GM10248 (cell line): ENCODE measurements at regions of chr3 and their contacts with region 1.

Region 1: DNA sequence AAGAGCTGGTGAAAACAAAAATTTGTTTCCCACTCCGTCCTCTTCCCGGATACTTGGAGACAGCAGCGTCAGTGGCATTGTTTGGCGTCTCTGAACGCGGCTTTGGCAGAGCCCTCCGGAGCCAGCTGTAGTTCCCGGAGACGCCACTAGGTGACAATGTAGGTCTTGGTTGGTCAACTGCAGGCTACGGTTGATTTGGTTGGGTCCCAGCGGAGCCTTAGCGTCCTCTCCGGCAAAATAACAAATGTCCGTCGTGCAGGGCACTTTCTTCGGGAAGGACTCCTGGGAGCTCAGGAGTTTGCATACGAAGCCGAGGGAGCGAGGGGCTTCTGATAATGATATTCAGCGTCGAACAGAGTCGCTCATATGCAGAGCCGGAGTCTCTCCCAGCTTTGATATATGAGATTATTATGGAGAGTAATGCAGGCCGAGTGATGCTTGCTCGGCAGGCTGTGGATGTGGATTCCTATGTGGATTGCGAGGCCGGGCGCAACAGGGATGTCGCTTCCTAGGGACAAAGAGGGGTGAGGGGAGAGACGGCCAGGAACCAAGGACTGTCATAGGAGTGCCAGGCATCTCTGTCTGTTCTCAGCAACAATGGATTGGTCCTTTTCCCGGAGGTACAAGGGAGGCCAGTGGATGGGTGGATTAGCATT is 74.8 kb downstream of the IL20RB start:
- DNase-seq: peak; percentile 83
- CTCF ChIP-seq: peak; percentile 94

Region 2: DNA sequence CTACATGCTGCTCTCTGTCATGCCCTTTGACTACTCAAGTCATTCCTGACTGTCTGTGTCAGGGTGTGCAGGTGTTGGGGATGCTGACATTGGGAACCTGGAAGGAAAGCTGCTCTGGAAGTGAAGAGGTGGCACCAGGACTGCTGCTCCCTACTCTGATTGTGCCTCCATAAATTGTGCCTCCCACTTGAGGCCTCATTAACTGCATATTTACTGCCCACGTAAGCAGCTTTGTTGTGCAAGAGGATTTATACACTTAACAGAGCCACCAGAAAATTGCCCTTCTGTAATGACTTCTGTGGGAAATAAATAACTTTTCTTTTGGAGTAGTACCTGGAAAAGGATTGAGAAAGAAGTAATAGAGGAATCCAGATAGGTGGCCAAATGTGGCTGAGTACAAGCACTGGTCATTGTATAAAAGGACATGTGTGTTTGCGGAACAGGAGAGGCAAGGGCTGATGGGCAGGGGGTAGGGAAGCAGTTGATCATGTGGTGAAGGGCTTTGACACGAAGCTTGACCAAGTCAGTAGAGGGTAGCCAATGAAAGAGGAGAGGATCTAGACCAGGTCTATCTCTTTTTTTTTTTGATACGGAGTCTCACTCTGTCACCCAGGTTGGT is 50.0 kb before region 1 on chr3:
- CTCF ChIA-PET with region 1: interaction called, 13 read pairs
- POLR2A ChIA-PET with region 1: no interaction called
- DNase-seq: no peak
- CTCF ChIP-seq: no peak

Region 3: DNA sequence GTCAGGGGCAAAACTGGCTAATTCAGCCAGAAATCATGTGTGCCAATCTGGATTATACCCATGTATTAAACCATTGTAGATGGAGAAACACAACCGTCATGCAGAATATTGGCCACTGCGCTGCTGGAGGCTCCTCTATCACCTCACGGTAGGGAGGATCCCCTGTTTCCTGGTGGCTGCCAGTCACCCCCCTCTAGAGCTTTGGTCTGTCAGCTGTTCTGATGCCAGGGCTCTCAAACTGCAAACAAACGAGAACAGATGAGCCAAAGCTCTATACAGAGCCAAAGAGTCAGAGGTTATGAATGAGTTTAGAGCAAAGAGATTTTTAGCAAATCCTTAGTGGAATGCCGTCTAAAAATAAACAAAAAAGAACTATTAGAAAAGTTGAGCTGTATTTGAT is 12.3 kb before region 1 on chr3:
- CTCF ChIA-PET with region 1: interaction called, 54 read pairs
- POLR2A ChIA-PET with region 1: no interaction called
- DNase-seq: no peak
- CTCF ChIP-seq: no peak

Region 4: GRCh38 chr3:137052298-137052697 is 19.7 kb after region 1 on chr3:
- CTCF ChIA-PET with region 1: interaction called, 10 read pairs
- POLR2A ChIA-PET with region 1: no interaction called
- DNase-seq: no peak
- CTCF ChIP-seq: no peak

Region 5: GRCh38 chr3:137946345-137946973 is 913.9 kb after region 1 on chr3:
- CTCF ChIA-PET with region 1: interaction called, 12 read pairs
- POLR2A ChIA-PET with region 1: no interaction called
- DNase-seq: peak; percentile 53
- CTCF ChIP-seq: peak; percentile 62